ENCODE measurements at regions of chr4 and their contacts with region 1.

Region 1: DNA sequence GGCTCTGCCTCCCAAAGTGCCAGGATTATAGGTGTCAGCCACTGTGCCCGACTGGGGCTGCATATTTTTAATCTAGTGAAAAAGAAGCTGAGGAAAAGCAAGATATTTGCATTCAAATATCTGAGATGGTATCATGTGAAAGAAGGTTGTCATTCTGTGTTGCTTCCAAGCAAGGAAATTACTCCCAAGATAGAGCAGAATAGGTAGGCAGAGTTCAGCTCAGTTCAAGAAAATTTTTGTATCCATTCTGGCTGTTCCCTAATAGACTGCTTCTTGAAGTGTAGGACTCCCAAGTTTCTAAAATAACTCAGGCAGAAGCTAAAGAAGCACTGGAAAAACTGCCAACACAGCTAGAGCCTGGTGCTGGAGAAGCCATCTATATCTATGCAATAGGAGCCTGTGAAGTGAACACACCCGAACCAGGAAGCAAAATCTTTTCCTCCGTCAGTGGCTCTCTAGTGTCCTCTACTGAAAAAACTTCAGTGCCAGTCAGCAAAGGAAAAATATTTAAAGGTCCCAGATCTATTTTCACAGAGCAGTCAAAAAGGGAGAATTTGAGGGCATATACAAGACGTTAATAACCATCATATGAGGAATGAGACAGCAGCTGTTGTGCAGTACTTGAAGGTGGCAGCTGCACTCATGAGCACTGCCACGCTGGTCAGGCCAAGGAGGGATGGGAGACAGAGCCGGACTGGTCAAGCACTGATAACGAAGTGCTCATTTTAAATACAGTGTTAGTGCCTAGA is 14.2 kb downstream of the MCUB start:
- DNase-seq: peak in 8 of 35 experiments; percentile 4 to 52 (median 14)
- ATAC-seq: peak; percentile 66 to 79 (median 70)
- H3K4me3 ChIP-seq: no peak overlapping the region
- H3K4me3 Mint-ChIP-seq: peak overlapping the region; percentile 17 to 53 (median 46)
- H3K27ac ChIP-seq: no peak overlapping the region
- H3K27ac Mint-ChIP-seq: peak overlapping the region; percentile 6 to 83
- H3K4me1 ChIP-seq: peaks cover 15 to 28% of the 10 kb centered on the region in 2 experiments
- H3K4me1 Mint-ChIP-seq: peaks cover 76 to 81% (median 78%) of the 10 kb centered on the region in 3 donors
- H3K27me3 ChIP-seq: no peaks in the 10 kb centered on the region
- H3K27me3 Mint-ChIP-seq: no peaks in the 10 kb centered on the region

Region 2: DNA sequence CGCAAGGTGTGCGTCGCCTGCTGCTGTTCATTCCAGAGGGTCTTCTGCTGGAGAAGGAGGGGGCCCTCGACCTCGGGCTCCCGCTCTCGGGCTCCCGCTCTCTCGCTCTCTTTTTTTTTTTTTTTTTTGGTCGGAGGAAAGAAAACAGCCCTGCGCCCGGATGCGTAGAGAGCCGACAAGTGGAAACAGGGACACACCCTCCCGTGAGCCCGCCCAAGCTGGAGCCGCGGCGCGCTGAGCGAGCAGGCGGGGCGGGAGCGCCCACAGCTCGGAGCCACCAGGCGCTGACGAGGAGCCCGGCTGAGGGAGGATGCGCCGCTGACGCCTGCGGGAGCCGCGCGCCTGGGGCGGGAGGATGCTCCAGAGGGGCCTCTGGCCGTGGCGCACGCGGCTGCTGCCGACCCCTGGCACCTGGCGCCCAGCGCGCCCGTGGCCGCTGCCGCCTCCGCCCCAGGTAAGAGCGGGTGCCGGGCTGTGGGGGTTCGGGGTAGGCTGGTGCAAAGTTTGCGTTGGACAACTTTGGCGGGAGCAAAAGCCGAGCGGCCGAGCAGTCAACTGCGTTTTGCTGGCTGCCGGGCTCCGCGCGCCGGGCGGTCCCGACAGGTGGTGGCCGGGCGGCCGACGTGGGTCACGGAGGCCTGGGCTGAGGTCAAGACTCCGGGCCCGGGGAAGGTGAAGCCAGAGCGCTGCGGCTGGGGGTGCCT is 14.1 kb before region 1 on chr4 and contains the start of gene MCUB:
- CTCF ChIA-PET with region 1: interaction called in 1 of 2 experiments, 12 read pairs
- POLR2A ChIA-PET with region 1: interaction called, 3 read pairs
- DNase-seq: peak; percentile 81 to 95 (median 91)
- ATAC-seq: peak; percentile 92 to 94 (median 93)
- H3K4me3 ChIP-seq: peak within 1 kb of the TSS; percentile 67 to 97
- H3K4me3 Mint-ChIP-seq: peak within 1 kb of the TSS; percentile 89 to 97 (median 96)
- H3K27ac ChIP-seq: peak within 1 kb of the TSS; percentile 93
- H3K27ac Mint-ChIP-seq: peak within 1 kb of the TSS; percentile 96 to 97
- H3K4me1 ChIP-seq: peaks cover 24 to 32% of the 10 kb centered on the region in 2 experiments
- H3K4me1 Mint-ChIP-seq: peaks cover 59 to 63% (median 62%) of the 10 kb centered on the region in 3 donors
- H3K27me3 ChIP-seq: no peaks in the 10 kb centered on the region
- H3K27me3 Mint-ChIP-seq: no peaks in the 10 kb centered on the region
- total RNA-seq, gene MCUB: 88.9 to 139 (median 122) TPM

Region 3: GRCh38 chr4:109683621-109684253 is 109.5 kb after region 1 on chr4:
- CTCF ChIA-PET with region 1: no interaction called
- POLR2A ChIA-PET with region 1: no interaction called
- DNase-seq: no peak
- ATAC-seq: no peak
- H3K4me3 ChIP-seq: no peak overlapping the region
- H3K4me3 Mint-ChIP-seq: no peak overlapping the region
- H3K27ac ChIP-seq: no peak overlapping the region
- H3K27ac Mint-ChIP-seq: peak overlapping the region; percentile 57 to 78
- H3K4me1 ChIP-seq: no peaks in the 10 kb centered on the region
- H3K4me1 Mint-ChIP-seq: peaks cover 34 to 36% (median 34%) of the 10 kb centered on the region in 3 donors
- H3K27me3 ChIP-seq: no peaks in the 10 kb centered on the region
- H3K27me3 Mint-ChIP-seq: no peaks in the 10 kb centered on the region

Measured in T-cell (primary cell).